ENCODE measurements at regions of chr17 and their contacts with region 1.

Region 1: DNA sequence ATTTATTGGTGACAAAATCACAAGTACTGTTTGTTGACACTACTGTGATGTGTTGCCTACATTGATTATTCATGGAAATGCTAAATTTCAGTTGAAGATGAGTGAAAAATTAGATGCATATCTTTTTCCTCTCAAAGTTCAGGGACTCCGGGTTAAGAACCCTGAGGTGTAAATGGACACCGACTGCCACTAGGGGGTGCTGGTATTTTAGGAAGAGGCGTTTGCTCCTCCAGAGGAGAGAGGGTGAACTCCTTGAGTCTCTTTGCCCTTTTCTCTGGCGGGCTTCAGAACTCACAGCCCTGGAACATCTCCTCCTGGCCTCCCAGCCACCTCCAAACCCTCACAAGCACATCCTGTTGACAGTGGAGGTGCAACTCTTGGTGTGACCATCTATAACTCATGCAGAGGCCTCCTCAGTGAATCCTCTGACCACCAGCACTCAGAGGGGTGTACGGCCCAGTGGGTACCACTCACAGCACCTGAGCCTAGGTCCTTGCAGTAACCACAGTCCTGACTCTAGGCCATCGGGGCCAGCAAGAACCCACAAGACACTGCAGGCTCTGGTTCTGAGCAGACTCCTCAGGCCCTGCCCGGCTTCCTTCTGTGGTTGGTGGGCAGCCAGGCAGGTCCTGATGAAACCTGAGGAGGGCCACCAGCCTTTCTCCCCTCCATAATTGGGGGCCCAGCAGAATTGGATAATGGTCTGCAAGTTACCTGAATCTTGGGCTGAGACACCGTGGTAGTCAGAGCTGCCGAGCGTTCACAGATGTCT is 26.2 kb upstream of the PIK3R5 start:
- DNase-seq: peak in 2 of 3 donors; percentile 40 to 84
- ATAC-seq: peak; percentile 79
- H3K4me3 ChIP-seq: no peak overlapping the region
- H3K4me1 ChIP-seq: no peaks in the 10 kb centered on the region
- CTCF ChIP-seq: peak; percentile 45

Region 2: GRCh38 chr17:9054126-9054975 is 62.7 kb after region 1 on chr17:
- intact Hi-C with region 1: no loop called
- DNase-seq: no peak
- ATAC-seq: no peak
- H3K4me3 ChIP-seq: no peak overlapping the region
- H3K4me1 ChIP-seq: no peaks in the 10 kb centered on the region
- CTCF ChIP-seq: no peak

Region 3: GRCh38 chr17:9522074-9522473 is 530.4 kb after region 1 on chr17:
- intact Hi-C with region 1: loop called (anchors 5 to 10 kb)
- DNase-seq: peak in 1 of 3 donors; percentile 38
- ATAC-seq: no peak
- H3K4me3 ChIP-seq: no peak overlapping the region
- H3K4me1 ChIP-seq: no peaks in the 10 kb centered on the region
- CTCF ChIP-seq: no peak